ENCODE measurements at regions of chr17 and their contacts with region 1.

Region 1: DNA sequence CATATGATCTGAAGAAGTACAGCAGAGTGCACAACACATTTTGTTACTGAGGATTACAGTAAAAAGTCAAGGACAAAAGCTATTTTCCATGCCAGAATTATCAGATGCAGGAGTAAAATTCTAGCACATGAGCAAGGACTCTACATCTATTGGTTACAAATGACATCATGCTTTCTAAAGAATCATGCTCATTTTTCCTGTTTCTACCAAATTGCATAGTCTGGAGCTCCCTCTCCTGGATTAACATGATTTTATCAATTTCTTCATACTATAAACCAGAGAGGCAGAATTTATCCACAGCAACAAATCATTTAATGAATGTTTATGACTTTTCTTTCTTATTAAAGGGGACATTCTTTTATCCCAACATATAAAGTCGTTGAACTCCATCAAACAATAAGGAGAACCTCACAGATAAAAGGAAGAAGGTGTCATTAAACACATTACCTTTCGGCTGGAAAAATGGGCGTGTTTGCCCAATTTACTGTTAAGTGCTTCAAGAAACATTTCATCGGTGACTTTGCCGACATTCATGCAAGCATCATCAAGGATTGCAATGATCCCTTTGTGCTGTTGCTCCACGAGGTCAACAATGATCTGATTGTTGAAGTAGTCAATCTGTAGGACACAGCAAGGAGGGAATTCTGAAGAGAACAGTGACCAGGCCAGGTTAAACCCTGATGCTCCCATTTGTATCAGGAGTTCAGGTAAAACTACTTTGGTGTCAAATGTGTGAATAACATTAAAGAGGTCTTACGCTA is 121.7 kb downstream of the MYO1D start:
- DNase-seq: no peak
- ATAC-seq: peak; percentile 69

Region 2: GRCh38 chr17:32429598-32429997 is 325.6 kb before region 1 on chr17:
- intact Hi-C with region 1: no loop called
- DNase-seq: no peak
- ATAC-seq: no peak

Region 3: GRCh38 chr17:32461853-32462617 is 293.2 kb before region 1 on chr17:
- intact Hi-C with region 1: loop called (anchors 10 kb)
- DNase-seq: no peak
- ATAC-seq: peak; percentile 66

Measured in left ventricle myocardium superior (tissue), 1 donor.